A549 (cell line): ENCODE measurements at regions of chr1 and their contacts with region 1.

Region 1: DNA sequence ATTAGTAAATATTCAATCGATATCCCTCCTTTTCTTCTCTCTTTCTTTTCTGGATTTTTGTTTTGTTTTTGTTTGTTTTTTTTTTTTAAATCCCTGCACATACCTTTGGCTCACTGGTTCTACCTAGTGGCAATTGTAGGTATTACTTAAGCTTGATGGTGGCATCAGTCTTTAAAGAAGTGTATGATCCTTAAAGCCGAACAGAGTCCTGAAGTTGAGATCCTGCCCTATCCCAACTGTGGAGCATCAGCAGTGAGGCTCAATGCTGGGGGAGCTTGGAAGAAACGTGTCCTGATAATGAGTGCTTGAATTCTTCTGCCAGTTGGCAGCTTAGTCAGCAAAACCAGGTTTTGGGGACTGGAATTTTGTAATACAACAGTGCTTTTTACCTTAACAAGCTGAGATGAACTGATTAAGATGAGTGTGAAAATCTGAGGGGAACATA is 60.8 kb downstream of the FASLG start:
- DNase-seq: peak; percentile 54
- ATAC-seq: peak; percentile 65 to 85; a peak in 4 of 6 replicates
- H3K4me3 ChIP-seq: no peak overlapping the region
- H3K27ac ChIP-seq: 0 out of 6 replicates have a peak overlapping the region, but pooled peaks of 1 of the 2 experiments have one; percentile 40
- H3K4me1 ChIP-seq: peaks cover 14% of the 10 kb centered on the region
- CTCF ChIP-seq: peak; percentile 84
- EP300 ChIP-seq: no peak
- POLR2A ChIP-seq: no peak
- RAD21 ChIP-seq: peak; percentile 87

Region 2: DNA sequence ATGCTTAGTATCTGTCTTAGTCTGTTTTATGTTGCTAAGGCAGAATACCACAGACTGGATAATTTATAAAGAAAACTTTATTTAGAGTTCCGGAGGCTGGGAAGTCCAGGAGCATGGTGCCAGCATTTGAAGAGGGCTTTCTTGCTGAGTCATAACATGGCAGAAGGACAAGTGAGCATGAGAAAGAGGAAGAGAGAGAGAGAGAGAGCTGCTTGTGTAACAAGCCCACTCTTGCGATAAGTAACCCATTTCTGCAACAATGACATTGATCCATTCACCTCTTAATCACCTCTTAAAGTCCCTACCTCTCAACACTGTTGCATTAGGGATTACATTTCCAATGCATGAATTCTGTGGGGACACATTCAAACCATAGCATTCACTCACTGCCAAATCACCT is 1109.3 kb before region 1 on chr1:
- CTCF ChIA-PET with region 1: no interaction called
- POLR2A ChIA-PET with region 1: no interaction called
- DNase-seq: no peak
- ATAC-seq: no peak
- H3K4me3 ChIP-seq: no peak overlapping the region
- H3K27ac ChIP-seq: no peak overlapping the region
- H3K4me1 ChIP-seq: no peaks in the 10 kb centered on the region
- CTCF ChIP-seq: no peak
- EP300 ChIP-seq: no peak
- POLR2A ChIP-seq: no peak
- RAD21 ChIP-seq: no peak

Region 3: GRCh38 chr1:172414331-172414730 is 305.4 kb before region 1 on chr1:
- CTCF ChIA-PET with region 1: no interaction called
- POLR2A ChIA-PET with region 1: no interaction called
- DNase-seq: no peak
- ATAC-seq: no peak
- H3K4me3 ChIP-seq: no peak overlapping the region
- H3K27ac ChIP-seq: no peak overlapping the region
- H3K4me1 ChIP-seq: peaks cover 12% of the 10 kb centered on the region; the same call in 2 of the 3 replicates
- CTCF ChIP-seq: no peak
- EP300 ChIP-seq: no peak
- POLR2A ChIP-seq: no peak
- RAD21 ChIP-seq: no peak

Region 4: GRCh38 chr1:172449585-172450534 is 269.9 kb before region 1 on chr1:
- CTCF ChIA-PET with region 1: interaction called, 62 read pairs
- POLR2A ChIA-PET with region 1: no interaction called
- DNase-seq: peak; percentile 70 to 85
- ATAC-seq: peak; percentile 82 to 94
- H3K4me3 ChIP-seq: no peak overlapping the region
- H3K27ac ChIP-seq: peak overlapping the region; percentile 77 to 90
- H3K4me1 ChIP-seq: peaks cover 71% of the 10 kb centered on the region
- CTCF ChIP-seq: peak; percentile 88
- EP300 ChIP-seq: no peak
- POLR2A ChIP-seq: no peak
- RAD21 ChIP-seq: peak; percentile 91 to 92

Region 5: GRCh38 chr1:172609528-172609927 is 110.2 kb before region 1 on chr1:
- CTCF ChIA-PET with region 1: interaction called, 49 read pairs
- POLR2A ChIA-PET with region 1: interaction called, 4 read pairs
- DNase-seq: peak in 1 of 2 experiments; percentile 24
- ATAC-seq: peak; percentile 71 to 81; a peak in 4 of 6 replicates
- H3K4me3 ChIP-seq: no peak overlapping the region
- H3K27ac ChIP-seq: no peak overlapping the region
- H3K4me1 ChIP-seq: no peaks in the 10 kb centered on the region
- CTCF ChIP-seq: peak; percentile 54
- EP300 ChIP-seq: no peak
- POLR2A ChIP-seq: no peak
- RAD21 ChIP-seq: peak; percentile 62 to 72

Region 6: GRCh38 chr1:172616195-172616970 is 103.3 kb before region 1 on chr1:
- CTCF ChIA-PET with region 1: interaction called, 49 read pairs
- POLR2A ChIA-PET with region 1: no interaction called
- DNase-seq: no peak
- ATAC-seq: no peak
- H3K4me3 ChIP-seq: no peak overlapping the region
- H3K27ac ChIP-seq: no peak overlapping the region
- H3K4me1 ChIP-seq: no peaks in the 10 kb centered on the region
- CTCF ChIP-seq: no peak
- EP300 ChIP-seq: no peak
- POLR2A ChIP-seq: no peak
- RAD21 ChIP-seq: no peak

Region 7: DNA sequence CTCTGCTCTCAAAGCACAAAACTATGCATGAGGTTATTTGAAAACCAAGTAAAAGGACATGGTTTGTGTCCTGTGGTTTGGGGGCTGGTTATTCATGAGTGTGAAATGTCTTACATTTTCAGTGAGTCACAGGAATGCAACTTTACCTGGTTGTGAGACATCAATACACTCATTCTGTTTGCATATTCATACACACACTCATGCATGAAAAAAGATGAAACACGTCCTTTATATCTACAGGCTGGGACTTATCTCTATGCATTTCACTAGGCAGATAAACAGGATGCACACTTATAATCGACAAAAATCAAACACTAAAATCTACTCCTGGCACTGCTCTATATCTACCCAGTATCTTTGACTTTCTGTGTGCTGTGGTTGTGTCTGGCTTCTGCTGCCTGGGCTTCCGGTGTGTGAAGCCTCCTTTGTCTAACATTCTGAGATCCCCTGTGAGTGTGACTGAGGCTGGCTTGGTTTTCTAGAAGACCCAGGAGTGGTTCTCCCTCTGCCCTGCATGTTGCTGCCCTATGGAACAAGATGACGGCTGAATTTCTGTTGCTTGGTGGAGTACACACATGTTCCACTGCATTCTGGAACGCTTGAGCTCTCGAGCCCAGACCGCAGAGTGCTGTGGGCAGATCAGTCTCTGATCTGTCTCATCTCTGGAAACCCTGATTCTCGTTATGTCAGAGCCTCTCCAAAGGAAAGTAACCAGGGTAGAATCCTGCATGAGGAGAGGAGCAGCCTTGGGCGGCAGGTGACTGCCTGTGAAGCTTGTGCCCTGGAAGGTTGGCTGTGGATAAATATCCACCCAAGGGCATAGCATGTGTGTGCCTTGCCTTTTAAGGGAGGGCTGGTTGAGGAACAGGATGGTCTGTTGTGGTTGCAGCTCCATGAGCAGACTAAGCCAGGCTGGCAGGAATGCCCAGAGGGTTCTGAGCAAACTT is 80.6 kb before region 1 on chr1:
- CTCF ChIA-PET with region 1: interaction called, 11 read pairs
- POLR2A ChIA-PET with region 1: no interaction called
- DNase-seq: peak; percentile 40 to 51
- ATAC-seq: peak; percentile 67 to 74; a peak in 5 of 6 replicates
- H3K4me3 ChIP-seq: no peak overlapping the region
- H3K27ac ChIP-seq: peak overlapping the region; percentile 58 to 83
- H3K4me1 ChIP-seq: peaks cover 42% of the 10 kb centered on the region
- CTCF ChIP-seq: no peak
- EP300 ChIP-seq: no peak
- POLR2A ChIP-seq: no peak
- RAD21 ChIP-seq: no peak

Region 8: DNA sequence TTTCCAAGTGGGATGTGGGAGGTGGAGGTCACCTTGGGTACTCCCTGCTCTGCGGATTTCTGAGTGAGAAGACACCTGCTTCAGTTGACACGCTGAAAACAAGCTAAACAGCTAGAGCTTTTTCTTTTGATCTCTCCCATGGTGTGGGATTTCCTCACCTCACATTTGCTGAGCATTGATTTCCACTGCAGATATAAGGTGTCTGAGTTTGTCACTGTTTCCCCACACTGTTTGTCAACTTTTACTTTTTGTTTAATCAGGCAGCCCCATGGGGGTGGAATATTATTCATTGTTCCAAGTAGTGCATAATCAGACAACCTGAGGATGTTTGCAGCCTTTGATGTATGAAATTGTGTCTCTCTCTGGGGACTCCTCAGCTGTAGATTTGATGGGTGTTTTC is 11.3 kb before region 1 on chr1:
- CTCF ChIA-PET with region 1: interaction called, 13 read pairs
- POLR2A ChIA-PET with region 1: no interaction called
- DNase-seq: no peak
- ATAC-seq: no peak
- H3K4me3 ChIP-seq: no peak overlapping the region
- H3K27ac ChIP-seq: no peak overlapping the region
- H3K4me1 ChIP-seq: no peaks in the 10 kb centered on the region
- CTCF ChIP-seq: no peak
- EP300 ChIP-seq: no peak
- POLR2A ChIP-seq: no peak
- RAD21 ChIP-seq: no peak

Region 9: GRCh38 chr1:172789866-172790644 is 70.3 kb after region 1 on chr1:
- CTCF ChIA-PET with region 1: no interaction called
- POLR2A ChIA-PET with region 1: no interaction called
- DNase-seq: no peak
- ATAC-seq: no peak
- H3K4me3 ChIP-seq: no peak overlapping the region
- H3K27ac ChIP-seq: no peak overlapping the region
- H3K4me1 ChIP-seq: no peaks in the 10 kb centered on the region
- CTCF ChIP-seq: no peak
- EP300 ChIP-seq: no peak
- POLR2A ChIP-seq: no peak
- RAD21 ChIP-seq: no peak